ENCODE measurements at regions of chr14 and their contacts with region 1.

Region 1: GRCh38 chr14:58501214-58501816 is 73.8 kb downstream of the KIAA0586 start:
- DNase-seq: no peak
- ATAC-seq: peak; percentile 87
- H3K4me3 ChIP-seq: no peak overlapping the region
- H3K27ac ChIP-seq: no peak overlapping the region
- H3K4me1 ChIP-seq: no peaks in the 10 kb centered on the region
- H3K27me3 ChIP-seq: no peaks in the 10 kb centered on the region
- CTCF ChIP-seq: peak; percentile 85

Region 2: GRCh38 chr14:58430156-58430555 is 71.2 kb before region 1 on chr14:
- intact Hi-C with region 1: no loop called
- DNase-seq: no peak
- ATAC-seq: no peak
- H3K4me3 ChIP-seq: no peak overlapping the region
- H3K27ac ChIP-seq: no peak overlapping the region
- H3K4me1 ChIP-seq: peaks cover 16% of the 10 kb centered on the region
- H3K27me3 ChIP-seq: no peaks in the 10 kb centered on the region
- CTCF ChIP-seq: no peak

Region 3: DNA sequence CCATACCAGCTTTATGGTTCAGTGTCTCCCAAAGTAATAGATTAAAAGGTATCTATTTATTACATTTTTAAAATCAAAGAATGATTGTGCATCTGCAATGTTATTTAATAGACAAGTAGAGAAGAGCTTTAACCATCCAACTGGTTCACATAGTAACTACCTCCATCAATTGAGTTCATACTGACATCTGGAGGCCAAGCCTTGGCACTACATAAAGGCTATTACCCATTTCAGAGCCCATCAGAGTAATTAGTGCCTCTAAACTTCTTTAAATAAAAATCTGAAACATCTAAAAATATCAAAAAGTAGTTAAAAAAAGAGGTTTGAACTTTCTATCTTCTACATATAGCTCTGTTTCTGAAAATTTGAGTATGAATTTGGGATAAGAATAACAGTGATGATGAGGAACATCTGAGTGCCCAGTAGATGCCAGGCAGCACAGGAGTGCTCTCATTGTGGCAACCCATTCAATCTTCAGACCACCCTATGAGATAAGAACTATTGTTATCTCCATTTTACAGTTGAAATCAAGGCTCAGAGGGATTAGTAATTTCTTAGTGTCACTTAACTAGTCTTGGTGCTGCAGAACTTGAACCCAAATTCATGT is 554.2 kb after region 1 on chr14:
- intact Hi-C with region 1: loop called (anchors 10 kb)
- DNase-seq: no peak
- ATAC-seq: peak; percentile 86
- H3K4me3 ChIP-seq: no peak overlapping the region
- H3K27ac ChIP-seq: no peak overlapping the region
- H3K4me1 ChIP-seq: no peaks in the 10 kb centered on the region
- H3K27me3 ChIP-seq: no peaks in the 10 kb centered on the region
- CTCF ChIP-seq: peak; percentile 80